Activated B cell treated with CpG ODN at 0.5 μM for 24 hours (primary cell): ENCODE measurements at regions of chr11 and their contacts with region 1.

Region 1: GRCh38 chr11:120335908-120336640 is at the start of gene ARHGEF12:
- DNase-seq: peak; percentile 81
- ATAC-seq: peak; percentile 68
- H3K4me3 Mint-ChIP-seq: peak within 1 kb of the TSS; percentile 91
- H3K27ac Mint-ChIP-seq: peak within 1 kb of the TSS; percentile 74
- H3K4me1 Mint-ChIP-seq: peaks cover 31% of the 10 kb centered on the region
- H3K27me3 Mint-ChIP-seq: peaks cover 35% of the 10 kb centered on the region
- CTCF ChIP-seq: no peak
- total RNA-seq, gene ARHGEF12: 20.9 and 25.8 TPM in 2 replicates

Region 2: GRCh38 chr11:120363436-120363835 is 27.4 kb after region 1 on chr11:
- CTCF ChIA-PET with region 1: no interaction called
- POLR2A ChIA-PET with region 1: no interaction called
- intact Hi-C with region 1: no loop called
- DNase-seq: no peak
- ATAC-seq: no peak
- H3K4me3 Mint-ChIP-seq: no peak overlapping the region
- H3K27ac Mint-ChIP-seq: no peak overlapping the region
- H3K4me1 Mint-ChIP-seq: no peaks in the 10 kb centered on the region
- H3K27me3 Mint-ChIP-seq: no peaks in the 10 kb centered on the region
- CTCF ChIP-seq: no peak

Region 3: DNA sequence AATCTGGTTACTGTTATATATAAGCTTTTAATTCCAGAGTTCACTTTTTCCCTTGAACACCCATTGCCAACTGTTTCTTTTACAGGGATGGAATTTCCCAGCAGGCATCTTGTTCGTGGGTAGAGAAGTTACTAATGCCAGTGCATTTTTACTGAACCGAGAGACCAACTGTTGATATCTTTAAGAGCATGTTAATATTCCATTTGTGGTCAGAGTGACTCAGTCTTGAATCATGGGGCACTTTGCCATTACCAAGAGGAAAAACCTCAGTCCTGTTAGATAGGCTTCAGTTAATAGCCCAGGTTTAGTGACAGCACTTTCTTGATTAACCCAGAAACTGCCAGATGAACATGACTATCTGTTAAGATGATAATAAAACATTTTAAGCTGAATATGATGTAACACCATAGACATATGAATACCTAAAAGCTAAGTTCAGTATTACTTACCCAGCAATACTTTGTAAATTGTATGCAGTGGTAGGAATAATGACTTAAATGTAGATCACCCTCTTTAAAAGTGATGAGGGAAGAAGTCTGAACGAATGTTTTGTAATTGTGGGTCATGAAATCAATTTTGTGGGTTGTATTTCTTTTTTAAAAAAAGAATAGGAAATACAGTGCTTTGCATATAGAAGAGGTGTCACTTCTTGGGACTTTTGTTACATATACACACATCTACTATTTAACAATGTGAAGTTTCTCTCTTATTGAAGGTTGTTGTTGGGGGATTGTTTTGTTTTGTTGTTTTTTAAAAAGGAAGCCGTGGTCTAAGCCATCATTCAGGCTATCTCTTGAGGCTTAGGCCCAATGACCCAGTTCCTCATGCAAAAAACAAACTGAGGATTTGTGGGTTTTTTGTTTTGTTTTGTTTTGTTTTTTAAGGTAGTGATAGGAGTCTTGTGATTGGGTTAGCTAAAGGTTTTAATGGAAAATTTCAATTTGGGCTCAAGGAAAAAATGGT is 96.3 kb after region 1 on chr11:
- CTCF ChIA-PET with region 1: no interaction called
- POLR2A ChIA-PET with region 1: no interaction called
- intact Hi-C with region 1: loop called (anchors 5 kb)
- DNase-seq: no peak
- ATAC-seq: peak; percentile 75
- H3K4me3 Mint-ChIP-seq: no peak overlapping the region
- H3K27ac Mint-ChIP-seq: peak overlapping the region; percentile 12
- H3K4me1 Mint-ChIP-seq: peaks cover 13% of the 10 kb centered on the region
- H3K27me3 Mint-ChIP-seq: no peaks in the 10 kb centered on the region
- CTCF ChIP-seq: no peak

Region 4: GRCh38 chr11:120682866-120683265 is 346.8 kb after region 1 on chr11:
- CTCF ChIA-PET with region 1: interaction called, 42 read pairs
- POLR2A ChIA-PET with region 1: no interaction called
- intact Hi-C with region 1: loop called (anchors 1 kb)
- DNase-seq: no peak
- ATAC-seq: no peak
- H3K4me3 Mint-ChIP-seq: no peak overlapping the region
- H3K27ac Mint-ChIP-seq: no peak overlapping the region
- H3K4me1 Mint-ChIP-seq: no peaks in the 10 kb centered on the region
- H3K27me3 Mint-ChIP-seq: peaks cover 9% of the 10 kb centered on the region
- CTCF ChIP-seq: no peak

Region 5: DNA sequence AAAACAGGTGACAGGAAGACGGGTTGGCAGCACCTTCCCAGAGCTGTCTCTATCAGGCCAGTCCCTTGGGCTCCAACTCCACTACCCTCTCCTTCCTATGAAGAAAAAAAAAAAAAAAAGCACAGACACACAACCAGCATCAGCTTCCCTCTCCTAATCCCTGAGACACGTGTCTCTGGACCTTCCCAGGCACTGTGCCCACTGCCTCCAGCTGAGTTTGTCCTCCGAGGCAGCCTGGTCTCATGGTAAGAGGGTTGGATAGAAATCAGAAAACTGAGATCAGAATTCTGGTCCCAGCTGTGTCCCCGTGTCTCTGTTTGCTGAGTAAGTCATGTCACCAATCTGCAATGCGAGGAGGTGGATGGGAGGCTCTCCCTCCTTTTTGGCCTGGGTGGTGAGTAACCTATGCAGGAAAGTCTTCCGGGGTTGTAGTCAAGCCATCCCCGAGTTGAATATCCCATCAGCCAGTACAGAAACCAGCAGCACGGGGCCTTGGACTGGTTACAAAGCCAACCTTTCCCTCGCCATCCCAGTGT is 494.1 kb after region 1 on chr11:
- CTCF ChIA-PET with region 1: no interaction called
- POLR2A ChIA-PET with region 1: no interaction called
- intact Hi-C with region 1: no loop called
- DNase-seq: no peak
- ATAC-seq: no peak
- H3K4me3 Mint-ChIP-seq: no peak overlapping the region
- H3K27ac Mint-ChIP-seq: no peak overlapping the region
- H3K4me1 Mint-ChIP-seq: no peaks in the 10 kb centered on the region
- H3K27me3 Mint-ChIP-seq: peaks cover 13% of the 10 kb centered on the region
- CTCF ChIP-seq: no peak

Region 6: DNA sequence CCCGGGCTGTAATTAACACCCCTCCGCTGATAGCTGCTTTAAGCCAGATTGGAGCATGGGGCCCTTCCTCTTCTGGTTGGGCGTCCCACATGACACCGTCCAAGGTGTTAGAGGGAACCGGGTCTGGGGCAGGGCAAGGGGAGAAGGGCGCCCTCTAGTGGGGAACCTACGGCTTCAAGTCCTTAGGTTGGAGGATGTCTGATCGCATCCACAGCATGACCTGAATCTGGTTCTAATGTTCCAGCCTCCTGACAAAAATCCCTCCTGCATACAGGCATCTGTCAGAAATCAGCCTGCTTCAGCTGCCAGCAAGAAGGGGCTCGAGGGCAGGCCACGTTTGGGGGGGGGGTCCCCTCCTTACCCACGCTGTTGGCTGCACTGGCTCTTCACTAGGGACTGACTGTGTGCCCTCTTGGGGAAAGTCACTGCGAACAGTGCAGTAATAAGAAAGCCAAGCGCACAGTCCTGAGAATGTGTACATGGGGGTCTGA is 593.6 kb after region 1 on chr11:
- CTCF ChIA-PET with region 1: no interaction called
- POLR2A ChIA-PET with region 1: no interaction called
- intact Hi-C with region 1: loop called (anchors 5 kb)
- DNase-seq: no peak
- ATAC-seq: no peak
- H3K4me3 Mint-ChIP-seq: no peak overlapping the region
- H3K27ac Mint-ChIP-seq: no peak overlapping the region
- H3K4me1 Mint-ChIP-seq: peaks cover 16% of the 10 kb centered on the region
- H3K27me3 Mint-ChIP-seq: peaks cover 16% of the 10 kb centered on the region
- CTCF ChIP-seq: no peak

Region 7: GRCh38 chr11:121023848-121024751 is 688.0 kb after region 1 on chr11 and contains the start of gene TBCEL:
- CTCF ChIA-PET with region 1: no interaction called
- POLR2A ChIA-PET with region 1: no interaction called
- intact Hi-C with region 1: loop called (anchors 10 kb)
- DNase-seq: peak; percentile 75
- ATAC-seq: peak; percentile 85
- H3K4me3 Mint-ChIP-seq: peak within 1 kb of the TSS; percentile 90
- H3K27ac Mint-ChIP-seq: peak within 1 kb of the TSS; percentile 46
- H3K4me1 Mint-ChIP-seq: peaks cover 21% of the 10 kb centered on the region
- H3K27me3 Mint-ChIP-seq: peaks cover 10% of the 10 kb centered on the region
- CTCF ChIP-seq: no peak
- total RNA-seq, gene TBCEL: 16.5 and 17.9 TPM in 2 replicates

Region 8: DNA sequence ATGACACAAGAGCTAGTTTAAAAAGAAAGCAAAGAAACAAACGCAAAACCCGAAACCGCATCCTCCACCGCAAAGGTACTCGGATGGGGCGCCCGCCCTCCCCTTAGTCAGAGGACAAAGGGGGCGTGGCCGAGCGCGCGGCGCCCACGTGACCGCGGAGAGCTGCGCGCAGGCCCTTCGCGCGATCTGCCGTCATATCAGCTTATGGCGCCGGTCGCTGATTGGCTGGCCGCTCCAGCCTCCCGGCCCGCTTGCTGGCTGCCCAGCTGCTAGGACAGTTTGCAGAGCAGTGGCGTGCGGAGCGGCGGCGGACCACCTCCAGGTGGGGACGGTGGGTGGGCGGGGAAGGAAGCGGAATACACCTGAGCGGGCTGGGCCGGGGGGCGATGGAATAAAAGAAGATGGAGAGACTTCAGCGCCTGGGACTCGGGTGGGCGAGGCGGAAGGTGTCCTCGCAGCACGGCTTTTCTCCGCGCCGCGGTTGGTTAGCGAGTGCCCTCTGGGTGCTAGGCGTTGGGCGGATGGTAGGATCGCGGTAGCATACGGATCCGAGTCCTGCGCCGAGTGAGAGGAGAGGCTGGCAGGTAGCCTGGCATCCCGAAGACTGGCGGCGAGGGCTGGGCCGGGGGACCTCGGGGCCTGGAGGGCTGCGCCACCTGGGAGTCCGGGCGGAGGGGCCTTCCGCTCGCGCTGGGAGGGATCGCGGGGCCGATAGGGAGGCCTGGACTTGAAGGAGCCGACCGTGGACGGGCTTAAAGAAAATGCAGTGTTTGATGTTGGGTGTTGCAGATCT is 956.6 kb after region 1 on chr11 and contains the start of gene SC5D:
- CTCF ChIA-PET with region 1: no interaction called
- POLR2A ChIA-PET with region 1: no interaction called
- intact Hi-C with region 1: loop called (anchors 5 kb)
- DNase-seq: peak; percentile 94
- ATAC-seq: peak; percentile 85
- H3K4me3 Mint-ChIP-seq: peak within 1 kb of the TSS; percentile 94
- H3K27ac Mint-ChIP-seq: peak within 1 kb of the TSS; percentile 97
- H3K4me1 Mint-ChIP-seq: peaks cover 50% of the 10 kb centered on the region
- H3K27me3 Mint-ChIP-seq: no peaks in the 10 kb centered on the region
- CTCF ChIP-seq: no peak
- total RNA-seq, gene SC5D: 35.2 and 40.4 TPM in 2 replicates